Activated CD8-positive, alpha-beta T cell treated with anti-CD3 and anti-CD28 coated beads for 36 hours (primary cell): ENCODE measurements at regions of chr3 and their contacts with region 1.

Region 1: DNA sequence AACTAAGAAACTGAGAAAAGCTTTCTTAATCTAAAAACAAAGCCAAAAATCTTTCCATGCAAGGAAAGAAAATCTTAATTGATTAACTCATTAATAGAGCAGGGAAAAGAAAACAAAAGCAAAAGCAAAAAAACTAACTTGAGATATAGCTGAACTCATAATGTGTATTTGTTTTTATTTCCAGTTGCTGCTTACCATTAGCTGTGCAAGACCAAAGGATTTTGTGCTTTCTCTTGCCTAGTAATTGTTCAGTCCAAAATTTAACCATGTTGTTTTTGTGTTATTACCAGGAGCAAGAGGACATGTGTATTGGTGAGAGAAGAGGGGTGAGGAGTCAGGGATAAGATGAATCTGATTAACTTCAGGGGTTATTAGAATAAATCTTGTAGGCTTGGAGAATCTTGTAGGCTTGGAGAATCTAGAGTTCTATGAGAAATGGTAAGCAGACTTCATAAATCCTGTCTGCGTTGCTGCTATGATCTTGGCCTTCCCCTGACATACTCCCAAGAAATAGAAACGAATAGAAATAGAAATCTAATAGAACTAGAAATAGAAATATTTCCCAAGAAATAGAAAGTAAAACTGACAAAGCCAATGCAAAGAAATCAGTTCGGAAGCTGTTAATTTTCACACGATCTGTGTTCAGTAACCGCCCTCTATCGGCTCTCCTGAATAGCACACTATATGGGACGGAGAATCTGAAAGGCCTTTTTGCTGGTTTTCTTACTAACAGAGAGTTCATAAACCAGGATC is 72.6 kb upstream of the TNFSF10 start:
- DNase-seq: peak; percentile 53
- ATAC-seq: peak; percentile 26
- H3K4me3 Mint-ChIP-seq: peak overlapping the region; percentile 73
- H3K27ac Mint-ChIP-seq: peak overlapping the region; percentile 86
- H3K4me1 Mint-ChIP-seq: peaks cover 53% of the 10 kb centered on the region
- H3K27me3 Mint-ChIP-seq: peaks cover 5% of the 10 kb centered on the region
- CTCF ChIP-seq: peak; percentile 96

Region 2: GRCh38 chr3:172384836-172385235 is 211.0 kb before region 1 on chr3:
- CTCF ChIA-PET with region 1: no interaction called
- POLR2A ChIA-PET with region 1: no interaction called
- intact Hi-C with region 1: no loop called
- DNase-seq: no peak
- ATAC-seq: no peak
- H3K4me3 Mint-ChIP-seq: no peak overlapping the region
- H3K27ac Mint-ChIP-seq: no peak overlapping the region
- H3K4me1 Mint-ChIP-seq: no peaks in the 10 kb centered on the region
- H3K27me3 Mint-ChIP-seq: no peaks in the 10 kb centered on the region
- CTCF ChIP-seq: no peak

Region 3: GRCh38 chr3:172449466-172450149 is 146.2 kb before region 1 on chr3:
- CTCF ChIA-PET with region 1: interaction called, 10 read pairs
- POLR2A ChIA-PET with region 1: no interaction called
- intact Hi-C with region 1: no loop called
- DNase-seq: peak; percentile 25
- ATAC-seq: no peak
- H3K4me3 Mint-ChIP-seq: no peak overlapping the region
- H3K27ac Mint-ChIP-seq: no peak overlapping the region
- H3K4me1 Mint-ChIP-seq: peaks cover 25% of the 10 kb centered on the region
- H3K27me3 Mint-ChIP-seq: peaks cover 71% of the 10 kb centered on the region
- CTCF ChIP-seq: no peak

Region 4: GRCh38 chr3:172501560-172501959 is 94.3 kb before region 1 on chr3:
- CTCF ChIA-PET with region 1: interaction called, 25 read pairs
- POLR2A ChIA-PET with region 1: interaction called, 4 read pairs
- intact Hi-C with region 1: no loop called
- DNase-seq: no peak
- ATAC-seq: no peak
- H3K4me3 Mint-ChIP-seq: no peak overlapping the region
- H3K27ac Mint-ChIP-seq: no peak overlapping the region
- H3K4me1 Mint-ChIP-seq: peaks cover 8% of the 10 kb centered on the region
- H3K27me3 Mint-ChIP-seq: no peaks in the 10 kb centered on the region
- CTCF ChIP-seq: no peak

Region 5: DNA sequence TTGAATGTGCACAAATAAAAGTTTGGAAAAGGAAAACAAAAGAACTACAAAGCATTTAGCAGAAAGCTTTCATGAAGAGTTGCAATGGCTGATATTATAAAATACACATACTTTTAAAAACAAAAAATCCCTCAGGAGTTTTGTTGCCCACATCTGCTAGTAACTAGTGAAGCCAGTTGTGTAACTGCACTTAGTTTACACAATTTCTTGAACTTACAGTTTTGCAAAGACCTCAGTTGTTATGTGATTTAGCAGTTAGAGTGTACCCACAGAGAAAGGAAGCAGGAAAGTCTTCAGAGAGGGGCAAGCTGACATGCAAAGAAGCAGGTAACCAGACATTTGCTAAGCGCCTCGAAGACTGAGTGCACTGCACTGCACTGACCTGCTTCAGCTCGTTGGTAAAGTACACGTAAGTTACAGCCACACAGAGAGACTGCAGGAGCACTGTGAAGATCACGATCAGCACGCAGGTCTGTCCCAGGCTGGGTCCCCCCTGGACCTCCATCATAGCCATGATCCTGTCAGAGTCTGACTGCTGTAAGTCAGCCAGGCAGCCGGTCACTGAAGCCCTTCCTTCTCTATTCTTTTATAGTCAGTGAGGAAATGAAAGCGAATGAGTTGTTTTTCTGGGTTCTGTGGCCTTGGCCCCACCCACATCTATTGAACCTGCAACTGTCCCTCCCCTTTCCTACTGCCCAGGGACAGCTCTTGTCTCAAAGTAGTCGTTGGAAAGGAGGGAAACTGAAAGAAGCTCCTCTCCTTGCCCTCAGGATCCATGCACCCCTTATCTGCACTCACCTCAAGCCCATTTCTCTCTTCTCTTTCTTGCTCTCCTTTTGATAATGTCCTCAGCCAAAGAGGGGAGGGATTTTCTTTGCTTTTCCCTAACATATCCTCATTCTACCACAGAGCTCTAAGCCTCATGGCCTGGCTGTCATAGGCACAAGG is 72.7 kb before region 1 on chr3 and contains the start of gene TNFSF10:
- CTCF ChIA-PET with region 1: interaction called, 78 read pairs
- POLR2A ChIA-PET with region 1: interaction called, 15 read pairs
- intact Hi-C with region 1: loop called (anchors 1 kb)
- DNase-seq: peak; percentile 86
- ATAC-seq: peak; percentile 87
- H3K4me3 Mint-ChIP-seq: peak within 1 kb of the TSS; percentile 92
- H3K27ac Mint-ChIP-seq: peak within 1 kb of the TSS; percentile 91
- H3K4me1 Mint-ChIP-seq: peaks cover 49% of the 10 kb centered on the region
- H3K27me3 Mint-ChIP-seq: no peaks in the 10 kb centered on the region
- CTCF ChIP-seq: no peak
- total RNA-seq, gene TNFSF10: 21.5 to 23.6 TPM

Region 6: GRCh38 chr3:172550347-172550943 is 45.4 kb before region 1 on chr3:
- CTCF ChIA-PET with region 1: interaction called, 11 read pairs
- POLR2A ChIA-PET with region 1: interaction called, 5 read pairs
- intact Hi-C with region 1: loop called (anchors 5 kb)
- DNase-seq: peak; percentile 96
- ATAC-seq: peak; percentile 100
- H3K4me3 Mint-ChIP-seq: no peak overlapping the region
- H3K27ac Mint-ChIP-seq: peak overlapping the region; percentile 66
- H3K4me1 Mint-ChIP-seq: peaks cover 34% of the 10 kb centered on the region
- H3K27me3 Mint-ChIP-seq: no peaks in the 10 kb centered on the region
- CTCF ChIP-seq: no peak

Region 7: GRCh38 chr3:172580680-172581401 is 15.0 kb before region 1 on chr3:
- CTCF ChIA-PET with region 1: interaction called, 13 read pairs
- POLR2A ChIA-PET with region 1: interaction called, 26 read pairs
- intact Hi-C with region 1: loop called (anchors 1 kb)
- DNase-seq: no peak
- ATAC-seq: peak; percentile 53
- H3K4me3 Mint-ChIP-seq: peak overlapping the region; percentile 37
- H3K27ac Mint-ChIP-seq: peak overlapping the region; percentile 86
- H3K4me1 Mint-ChIP-seq: peaks cover 78% of the 10 kb centered on the region
- H3K27me3 Mint-ChIP-seq: no peaks in the 10 kb centered on the region
- CTCF ChIP-seq: no peak

Region 8: GRCh38 chr3:172622916-172623700 is 27.3 kb after region 1 on chr3:
- CTCF ChIA-PET with region 1: interaction called, 15 read pairs
- POLR2A ChIA-PET with region 1: no interaction called
- intact Hi-C with region 1: no loop called
- DNase-seq: peak; percentile 51
- ATAC-seq: peak; percentile 47
- H3K4me3 Mint-ChIP-seq: no peak overlapping the region
- H3K27ac Mint-ChIP-seq: no peak overlapping the region
- H3K4me1 Mint-ChIP-seq: peaks cover 11% of the 10 kb centered on the region
- H3K27me3 Mint-ChIP-seq: peaks cover 3% of the 10 kb centered on the region
- CTCF ChIP-seq: peak; percentile 85

Region 9: DNA sequence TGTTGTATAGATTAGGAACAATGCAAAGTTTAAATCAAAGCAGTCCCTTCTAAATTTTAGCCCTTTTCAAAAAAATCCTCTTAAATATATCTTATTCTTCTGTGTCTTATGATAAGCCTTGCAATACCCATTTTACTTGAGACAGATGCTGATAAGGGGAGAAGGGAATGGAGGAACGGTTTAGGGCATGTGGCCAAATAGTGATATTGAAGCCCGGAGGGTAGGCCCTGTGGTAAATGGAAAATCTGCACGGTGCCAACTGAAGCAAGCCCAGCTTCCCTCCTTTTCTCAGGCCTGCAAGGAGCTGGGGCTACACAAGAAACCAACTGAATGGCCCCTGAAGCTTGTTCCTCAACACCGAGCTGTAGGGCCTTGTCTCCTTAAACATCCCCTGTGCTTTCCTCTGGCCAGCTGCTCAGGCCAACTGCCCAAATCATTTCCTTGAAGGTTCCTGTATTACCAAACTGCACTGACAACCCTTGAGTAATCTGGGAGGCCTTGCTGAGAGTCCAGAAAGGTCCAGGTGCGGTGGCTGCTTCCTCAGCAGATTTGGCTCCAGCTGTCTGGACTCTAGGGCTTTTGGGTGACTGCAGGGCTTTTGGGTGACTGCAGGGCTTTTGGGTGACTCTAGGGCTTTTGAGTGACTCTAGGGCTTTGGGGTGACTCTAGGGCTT is 47.8 kb after region 1 on chr3:
- CTCF ChIA-PET with region 1: no interaction called
- POLR2A ChIA-PET with region 1: no interaction called
- intact Hi-C with region 1: no loop called
- DNase-seq: no peak
- ATAC-seq: no peak
- H3K4me3 Mint-ChIP-seq: no peak overlapping the region
- H3K27ac Mint-ChIP-seq: no peak overlapping the region
- H3K4me1 Mint-ChIP-seq: no peaks in the 10 kb centered on the region
- H3K27me3 Mint-ChIP-seq: no peaks in the 10 kb centered on the region
- CTCF ChIP-seq: no peak

Region 10: DNA sequence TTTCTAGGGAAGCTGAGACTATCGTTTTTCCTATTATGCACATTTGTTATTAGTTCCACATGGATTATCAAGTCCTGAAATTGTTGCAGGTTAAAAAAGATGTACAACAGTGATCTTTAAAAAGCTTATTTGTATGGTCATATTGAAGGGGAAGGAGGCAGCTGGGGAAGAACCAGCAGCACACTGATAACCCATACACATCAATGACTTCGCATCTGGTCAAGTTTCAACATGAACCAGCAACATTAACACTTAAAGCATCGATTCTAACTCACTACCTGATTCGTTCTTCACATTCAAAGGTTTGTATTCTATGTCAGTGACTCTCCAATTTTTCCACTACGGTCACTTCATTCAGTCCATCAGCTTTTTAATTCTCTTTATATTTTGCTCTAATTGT is 58.7 kb after region 1 on chr3:
- CTCF ChIA-PET with region 1: no interaction called
- POLR2A ChIA-PET with region 1: no interaction called
- intact Hi-C with region 1: no loop called
- DNase-seq: no peak
- ATAC-seq: no peak
- H3K4me3 Mint-ChIP-seq: no peak overlapping the region
- H3K27ac Mint-ChIP-seq: no peak overlapping the region
- H3K4me1 Mint-ChIP-seq: no peaks in the 10 kb centered on the region
- H3K27me3 Mint-ChIP-seq: no peaks in the 10 kb centered on the region
- CTCF ChIP-seq: no peak